Calu3 (cell line): ENCODE measurements at regions of chr9 and their contacts with region 1.

Region 1: GRCh38 chr9:80968611-80969010 is 720.7 kb downstream of the TLE1 start:
- DNase-seq: no peak
- H3K4me3 Mint-ChIP-seq: no peak overlapping the region
- H3K27ac Mint-ChIP-seq: no peak overlapping the region
- H3K4me1 Mint-ChIP-seq: no peaks in the 10 kb centered on the region
- H3K27me3 Mint-ChIP-seq: no peaks in the 10 kb centered on the region
- CTCF ChIP-seq: no peak

Region 2: DNA sequence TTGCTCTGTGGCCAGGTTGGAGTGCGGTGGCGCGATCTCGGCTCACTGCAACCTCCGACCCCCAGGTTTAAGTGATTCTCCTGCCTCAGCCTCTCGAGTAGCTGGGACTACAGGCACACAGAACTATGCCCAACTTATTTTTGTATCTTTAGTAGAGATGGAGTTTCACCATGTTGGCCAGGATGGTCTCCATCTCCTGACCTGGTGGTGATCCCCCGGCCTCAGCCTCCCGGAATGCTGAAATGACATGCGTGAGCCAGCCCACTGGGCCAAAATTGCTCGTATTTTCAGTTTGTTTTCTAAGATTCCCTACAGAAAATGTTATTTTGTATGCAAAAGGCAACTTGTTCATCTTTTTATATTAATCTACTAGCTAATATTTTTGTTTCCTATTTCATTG is 61.9 kb before region 1 on chr9:
- CTCF ChIA-PET with region 1: no interaction called
- intact Hi-C with region 1: no loop called
- DNase-seq: no peak
- H3K4me3 Mint-ChIP-seq: no peak overlapping the region
- H3K27ac Mint-ChIP-seq: no peak overlapping the region
- H3K4me1 Mint-ChIP-seq: no peaks in the 10 kb centered on the region
- H3K27me3 Mint-ChIP-seq: no peaks in the 10 kb centered on the region
- CTCF ChIP-seq: no peak

Region 3: DNA sequence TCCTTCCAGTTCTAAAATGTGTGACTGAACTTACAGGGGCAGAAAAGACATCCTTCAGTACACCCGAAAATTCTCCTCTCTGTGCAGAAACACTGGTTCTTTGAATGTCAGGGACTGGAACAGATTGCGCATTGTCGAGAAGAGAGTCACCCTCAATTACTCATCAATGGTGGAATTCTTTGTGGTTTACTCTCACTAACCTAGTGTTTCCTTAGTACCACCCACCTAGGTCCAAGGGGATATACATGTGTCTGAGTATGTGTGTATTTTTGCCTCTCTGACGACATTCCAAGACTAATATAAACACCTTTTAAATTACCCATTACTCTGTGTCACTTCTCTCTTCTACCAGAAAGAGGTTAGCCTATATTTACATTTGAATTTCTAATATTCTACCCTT is 59.9 kb after region 1 on chr9:
- CTCF ChIA-PET with region 1: no interaction called
- intact Hi-C with region 1: loop called (anchors 10 kb)
- DNase-seq: peak; percentile 39
- H3K4me3 Mint-ChIP-seq: no peak overlapping the region
- H3K27ac Mint-ChIP-seq: peak overlapping the region; percentile 39
- H3K4me1 Mint-ChIP-seq: peaks cover 31% of the 10 kb centered on the region
- H3K27me3 Mint-ChIP-seq: no peaks in the 10 kb centered on the region
- CTCF ChIP-seq: no peak